Posterior vena cava (tissue), 2 donors: ENCODE measurements at regions of chr4 and their contacts with region 1.

Region 1: DNA sequence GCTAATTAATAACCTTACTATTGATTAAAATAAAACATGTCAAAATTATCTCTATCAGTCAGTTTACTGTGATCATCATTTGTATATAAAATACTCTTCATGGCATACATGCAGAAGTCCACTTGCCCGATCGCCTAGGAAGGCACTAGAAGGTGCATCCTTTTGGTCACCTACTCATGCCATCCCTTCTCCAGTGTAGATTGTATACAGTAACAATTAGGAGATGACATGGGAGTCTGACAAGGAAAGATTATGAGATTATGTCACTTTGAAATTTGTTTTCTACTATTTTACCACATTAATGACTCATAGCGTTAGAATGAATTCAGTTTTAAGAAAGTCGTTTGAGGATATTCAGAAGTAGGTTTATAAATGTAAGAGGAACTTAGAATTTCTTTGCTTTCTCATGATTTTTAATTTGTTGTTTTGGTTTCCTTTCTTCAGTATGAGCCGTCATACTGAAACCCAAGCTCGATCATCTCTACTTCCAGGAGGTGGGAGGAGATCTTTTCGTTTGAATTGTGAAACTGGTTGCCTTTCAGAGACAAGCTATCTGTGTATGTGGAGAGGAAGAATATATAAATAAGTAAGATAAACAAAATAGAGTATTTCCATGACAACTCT is 51.1 kb upstream of the UNC5C start:
- DNase-seq: no peak

Region 2: DNA sequence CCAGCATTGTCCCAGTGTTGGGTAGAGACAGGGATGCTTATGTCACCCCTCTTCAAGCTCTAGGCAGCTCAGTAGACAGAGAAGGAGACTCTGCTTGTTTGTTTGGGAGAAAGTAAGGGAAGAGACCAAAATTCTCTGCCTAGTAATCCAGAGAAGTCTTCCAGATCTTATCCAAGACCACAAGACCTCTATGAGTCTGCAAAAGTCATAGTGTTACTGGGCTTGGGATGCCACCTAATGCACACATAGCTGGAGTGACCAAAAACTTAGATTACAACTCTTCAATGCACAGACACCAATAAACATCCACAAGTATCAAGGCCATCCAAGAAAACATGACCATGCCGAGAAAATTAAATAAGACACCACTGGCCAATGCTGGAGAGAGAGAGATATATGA is 256.7 kb before region 1 on chr4:
- intact Hi-C with region 1: no loop called
- DNase-seq: no peak

Region 3: DNA sequence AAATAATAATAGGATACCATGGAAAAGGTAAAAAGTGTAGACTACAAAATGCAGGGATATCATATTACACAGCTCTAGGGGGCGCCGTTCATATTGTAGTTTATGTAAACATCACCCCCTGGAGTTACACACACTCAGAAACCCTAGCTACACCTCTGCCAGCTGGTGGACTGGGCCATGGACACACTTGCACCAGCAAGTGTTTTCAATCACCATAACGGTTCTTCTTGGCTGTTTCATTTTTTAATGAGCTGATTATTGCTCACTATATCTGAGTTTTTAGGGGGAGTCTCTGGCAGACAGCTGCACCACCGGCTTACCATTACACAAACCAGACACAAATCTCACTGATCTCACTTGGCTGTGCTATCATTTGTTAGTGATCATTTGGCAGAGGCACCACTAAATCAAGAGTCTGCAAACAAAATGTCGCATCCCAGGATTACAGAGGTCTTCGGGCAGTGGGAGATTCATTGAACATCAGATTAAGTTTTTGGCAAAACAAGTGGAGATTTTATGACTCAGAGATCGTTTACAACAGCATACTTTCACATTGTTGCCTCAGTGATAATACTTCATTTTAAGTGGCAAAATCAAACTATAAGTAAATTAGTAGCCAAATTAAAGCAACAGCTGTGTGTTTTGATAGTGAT is 236.9 kb before region 1 on chr4:
- intact Hi-C with region 1: loop called in 1 of 2 experiments (anchors 5 kb)
- DNase-seq: no peak

Region 4: GRCh38 chr4:96097040-96097607 is 497.2 kb after region 1 on chr4:
- intact Hi-C with region 1: no loop called
- DNase-seq: no peak